ENCODE measurements at regions of chr22 and their contacts with region 1.

Region 1: DNA sequence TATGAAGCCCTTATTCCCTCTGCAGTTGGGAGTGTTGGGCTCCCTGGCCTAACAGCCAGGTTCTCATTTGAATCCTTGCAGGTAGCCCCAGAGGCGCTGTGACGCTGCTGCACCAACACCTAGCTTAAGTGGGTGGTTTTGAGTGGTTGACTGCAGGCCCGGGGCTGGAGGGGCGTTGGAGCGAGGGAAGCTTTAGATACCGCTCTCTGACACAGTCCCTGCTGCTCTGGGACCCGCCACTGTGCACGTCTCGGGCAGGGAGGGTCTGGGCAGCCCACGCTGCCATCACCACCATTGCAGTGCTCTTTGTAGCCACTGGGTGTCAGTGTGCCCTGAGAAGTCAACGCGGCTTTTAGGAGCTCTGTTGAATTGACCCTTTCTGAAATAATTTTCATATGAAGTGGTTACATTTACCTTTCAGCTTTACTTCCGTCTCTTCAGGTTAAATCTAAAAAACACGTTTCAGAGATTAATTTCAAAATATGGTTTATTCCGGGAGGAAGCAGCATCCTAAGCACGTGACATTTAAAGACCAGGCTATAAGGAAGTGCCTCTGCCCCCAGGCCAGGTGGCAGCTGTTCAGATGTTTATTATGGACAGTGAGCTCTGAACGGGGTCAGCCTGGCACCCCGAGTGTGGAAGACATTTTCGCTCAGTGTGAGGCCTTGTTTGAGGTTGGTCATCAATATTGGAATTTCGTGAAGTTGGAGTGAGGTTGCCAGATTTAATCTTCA is 30.9 kb upstream of the PARVB start:
- DNase-seq: peak; percentile 66
- ATAC-seq: peak; percentile 52
- H3K4me3 Mint-ChIP-seq: no peak overlapping the region
- H3K27ac Mint-ChIP-seq: peak overlapping the region; percentile 54
- H3K4me1 Mint-ChIP-seq: peaks cover 22% of the 10 kb centered on the region
- H3K27me3 Mint-ChIP-seq: no peaks in the 10 kb centered on the region

Region 2: DNA sequence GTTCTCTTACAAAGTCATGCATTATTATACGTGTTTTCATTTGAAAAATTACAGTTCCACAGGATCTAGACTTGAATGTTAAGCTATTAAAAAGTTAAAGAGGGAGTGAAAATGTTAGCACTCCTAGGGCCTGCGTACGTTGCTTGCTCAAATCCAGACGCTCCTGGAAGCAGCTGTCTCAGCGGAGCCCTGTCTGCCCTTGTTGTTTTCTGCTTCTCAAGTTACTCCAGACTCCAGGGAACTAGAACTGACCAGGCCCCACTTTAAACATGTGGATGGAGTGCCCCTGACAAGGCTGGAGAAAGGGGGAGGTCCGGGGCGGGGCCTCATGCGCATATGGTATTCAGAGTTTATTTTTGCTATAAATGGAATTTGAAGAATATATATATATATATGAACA is 40.5 kb after region 1 on chr22:
- CTCF ChIA-PET with region 1: interaction called, 15 read pairs
- DNase-seq: no peak
- ATAC-seq: no peak
- H3K4me3 Mint-ChIP-seq: no peak overlapping the region
- H3K27ac Mint-ChIP-seq: no peak overlapping the region
- H3K4me1 Mint-ChIP-seq: peaks cover 21% of the 10 kb centered on the region
- H3K27me3 Mint-ChIP-seq: no peaks in the 10 kb centered on the region

Region 3: DNA sequence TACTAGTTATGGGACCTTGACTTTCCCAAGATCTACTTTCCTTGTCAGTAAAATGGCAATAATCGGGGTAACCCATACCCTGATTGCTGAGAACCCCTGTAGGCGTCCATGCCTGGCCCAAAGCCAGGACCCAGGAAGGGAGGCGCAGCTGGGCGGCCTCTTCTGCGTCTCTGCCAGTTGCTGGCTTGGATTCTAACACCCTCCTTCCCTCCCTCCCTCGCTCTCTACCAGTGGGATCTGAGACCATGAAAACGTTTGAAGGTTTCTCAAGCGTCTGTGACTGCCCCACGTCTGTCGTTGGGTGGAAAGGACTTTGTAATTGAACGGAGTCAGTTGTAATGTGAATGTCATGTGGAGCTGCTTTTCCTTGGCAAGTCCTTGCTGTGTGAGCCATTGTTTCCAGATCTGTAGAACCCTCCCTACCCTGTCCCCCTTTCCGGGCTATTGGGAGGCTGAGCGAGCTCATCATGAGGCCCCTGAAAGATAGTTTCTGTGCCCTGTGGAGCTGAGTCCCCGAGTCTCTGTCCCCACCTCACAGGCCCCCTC is 78.7 kb after region 1 on chr22:
- CTCF ChIA-PET with region 1: interaction called, 14 read pairs
- DNase-seq: no peak
- ATAC-seq: no peak
- H3K4me3 Mint-ChIP-seq: no peak overlapping the region
- H3K27ac Mint-ChIP-seq: no peak overlapping the region
- H3K4me1 Mint-ChIP-seq: peaks cover 7% of the 10 kb centered on the region
- H3K27me3 Mint-ChIP-seq: no peaks in the 10 kb centered on the region

Region 4: DNA sequence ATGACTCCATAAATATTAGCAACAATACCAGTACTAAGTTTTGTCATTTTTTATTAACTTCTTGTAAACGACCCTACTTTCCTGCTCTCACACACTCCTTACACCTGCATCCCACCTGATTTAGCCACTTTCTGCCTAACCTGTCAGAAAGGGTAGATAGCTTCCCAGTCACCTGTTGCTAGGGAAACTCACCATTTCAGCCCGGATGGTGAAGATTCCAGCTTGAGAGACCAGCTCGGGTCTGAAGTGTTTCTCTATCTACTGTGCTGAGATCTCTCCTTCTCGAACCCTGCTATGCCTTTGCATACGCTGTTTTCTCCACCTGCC is 187.5 kb after region 1 on chr22 and contains the start of gene PARVG:
- CTCF ChIA-PET with region 1: interaction called, 12 read pairs
- DNase-seq: peak; percentile 79
- ATAC-seq: peak; percentile 31
- H3K4me3 Mint-ChIP-seq: peak within 1 kb of the TSS; percentile 78
- H3K27ac Mint-ChIP-seq: peak within 1 kb of the TSS; percentile 95
- H3K4me1 Mint-ChIP-seq: peaks cover 28% of the 10 kb centered on the region
- H3K27me3 Mint-ChIP-seq: peaks cover 5% of the 10 kb centered on the region
- total RNA-seq, gene PARVG: 125 to 170 TPM

Region 5: DNA sequence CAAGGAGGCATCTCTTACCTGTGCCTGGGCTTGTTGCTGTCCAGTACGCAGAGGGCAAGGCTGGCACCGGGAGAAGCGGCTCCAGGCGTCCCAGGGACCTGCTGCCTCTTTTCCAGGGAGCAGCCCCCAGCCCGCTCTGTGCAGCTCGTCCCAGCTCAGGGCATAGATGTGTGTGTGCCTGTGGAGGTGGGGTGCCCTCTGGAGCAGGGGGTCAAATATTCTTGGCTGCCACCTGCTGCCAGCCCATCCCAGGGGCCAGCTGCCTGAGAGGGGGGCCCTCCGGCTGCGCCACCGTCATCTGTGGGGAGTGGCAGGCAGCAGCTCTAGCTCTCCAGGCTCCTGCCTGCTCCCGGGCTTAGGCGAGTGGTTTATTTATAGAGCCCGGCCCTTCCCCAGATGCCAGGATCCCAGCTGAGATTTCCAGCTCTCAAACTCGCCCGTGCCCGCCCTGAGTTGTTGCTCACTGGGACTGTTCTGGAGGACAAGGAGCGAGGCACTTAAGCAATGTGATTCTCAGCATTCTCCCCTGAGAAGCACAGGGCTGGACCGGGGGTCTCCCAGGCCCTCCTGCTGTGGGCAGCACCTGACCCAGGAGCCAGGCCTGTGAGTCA is 417.4 kb after region 1 on chr22:
- CTCF ChIA-PET with region 1: no interaction called
- DNase-seq: no peak
- ATAC-seq: no peak
- H3K4me3 Mint-ChIP-seq: no peak overlapping the region
- H3K27ac Mint-ChIP-seq: no peak overlapping the region
- H3K4me1 Mint-ChIP-seq: no peaks in the 10 kb centered on the region
- H3K27me3 Mint-ChIP-seq: peaks cover 5% of the 10 kb centered on the region

Region 6: GRCh38 chr22:44625981-44626687 is 632.9 kb after region 1 on chr22:
- CTCF ChIA-PET with region 1: interaction called, 52 read pairs
- DNase-seq: peak; percentile 84
- ATAC-seq: peak; percentile 81
- H3K4me3 Mint-ChIP-seq: no peak overlapping the region
- H3K27ac Mint-ChIP-seq: no peak overlapping the region
- H3K4me1 Mint-ChIP-seq: peaks cover 7% of the 10 kb centered on the region
- H3K27me3 Mint-ChIP-seq: peaks cover 3% of the 10 kb centered on the region